AG04449 (cell line): ENCODE measurements at regions of chr6 and their contacts with region 1.

Region 1: DNA sequence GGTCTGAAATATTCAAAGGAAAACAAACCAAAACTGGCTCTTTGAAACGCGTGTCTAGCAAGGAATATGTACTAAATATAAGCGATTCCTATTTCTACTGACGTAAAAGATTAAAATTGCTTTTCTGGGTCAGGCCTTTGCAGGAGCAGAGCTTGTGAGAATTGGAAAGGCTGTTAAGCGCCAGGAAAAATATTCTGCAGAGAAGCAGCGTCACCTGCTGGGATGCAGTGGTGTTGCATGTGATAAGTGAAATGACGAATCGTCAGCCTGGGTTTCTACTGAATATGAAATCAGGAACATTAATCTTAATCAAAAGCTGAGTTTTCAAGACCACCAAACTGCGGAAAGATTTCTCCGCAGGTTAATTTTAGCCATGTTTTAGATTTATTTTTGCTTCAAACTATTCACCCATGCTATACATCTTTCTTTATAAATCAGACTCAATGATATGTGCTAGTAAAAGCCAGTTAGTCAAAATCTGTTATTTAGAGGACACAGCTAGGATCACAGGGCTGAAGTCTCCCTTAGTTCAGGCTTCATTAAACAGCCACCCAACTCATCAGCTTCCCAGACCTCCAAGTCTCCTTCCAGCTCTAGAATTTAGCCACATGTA is 67.4 kb downstream of the ALDH8A1 start:
- DNase-seq: peak; percentile 57
- H3K4me3 ChIP-seq: no peak overlapping the region
- CTCF ChIP-seq: peak; percentile 81

Region 2: GRCh38 chr6:134111062-134111677 is 771.4 kb before region 1 on chr6:
- CTCF ChIA-PET with region 1: interaction called, 47 read pairs
- POLR2A ChIA-PET with region 1: no interaction called
- DNase-seq: no peak
- H3K4me3 ChIP-seq: no peak overlapping the region
- CTCF ChIP-seq: peak; percentile 69

Region 3: GRCh38 chr6:134161036-134161435 is 721.5 kb before region 1 on chr6:
- CTCF ChIA-PET with region 1: interaction called, 98 read pairs
- POLR2A ChIA-PET with region 1: no interaction called
- DNase-seq: no peak
- H3K4me3 ChIP-seq: no peak overlapping the region
- CTCF ChIP-seq: no peak

Region 4: GRCh38 chr6:134640975-134641429 is 241.5 kb before region 1 on chr6:
- CTCF ChIA-PET with region 1: interaction called, 21 read pairs
- POLR2A ChIA-PET with region 1: no interaction called
- DNase-seq: peak; percentile 86
- H3K4me3 ChIP-seq: no peak overlapping the region
- CTCF ChIP-seq: peak; percentile 82

Region 5: GRCh38 chr6:134870677-134871498 is 11.6 kb before region 1 on chr6:
- CTCF ChIA-PET with region 1: interaction called, 34 read pairs
- POLR2A ChIA-PET with region 1: no interaction called
- DNase-seq: no peak
- H3K4me3 ChIP-seq: no peak overlapping the region
- CTCF ChIP-seq: no peak

Region 6: GRCh38 chr6:134938896-134939295 is 56.4 kb after region 1 on chr6:
- CTCF ChIA-PET with region 1: interaction called, 79 read pairs
- POLR2A ChIA-PET with region 1: no interaction called
- DNase-seq: no peak
- H3K4me3 ChIP-seq: no peak overlapping the region
- CTCF ChIP-seq: no peak

Region 7: DNA sequence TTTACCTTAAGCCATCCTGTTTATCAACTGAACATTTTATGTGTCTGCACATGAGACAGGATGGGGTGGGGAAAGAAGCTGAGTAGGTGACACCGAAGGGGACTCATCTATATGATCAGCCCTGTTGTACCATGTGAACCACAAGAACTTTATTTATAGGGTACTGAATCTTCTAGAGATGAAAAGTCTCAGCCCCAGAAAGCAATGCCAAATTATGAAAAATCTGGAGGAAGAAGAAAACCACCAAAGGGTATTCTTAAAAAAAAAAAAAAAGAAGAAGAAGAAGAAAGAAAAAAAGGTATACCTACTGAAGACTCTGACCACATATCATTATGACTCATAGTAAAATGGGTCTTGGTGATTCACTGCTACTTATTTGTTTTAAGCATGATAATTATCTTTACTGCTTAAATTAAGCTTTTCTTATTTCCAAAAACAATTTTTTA is 211.9 kb after region 1 on chr6:
- CTCF ChIA-PET with region 1: no interaction called
- POLR2A ChIA-PET with region 1: no interaction called
- DNase-seq: no peak
- H3K4me3 ChIP-seq: no peak overlapping the region
- CTCF ChIP-seq: no peak